ENCODE measurements at regions of chr16 and their contacts with region 1.

Region 1: GRCh38 chr16:75110637-75111513 is 5.7 kb downstream of the LDHD start:
- DNase-seq: peak; percentile 92
- H3K4me3 Mint-ChIP-seq: peak overlapping the region; percentile 55
- H3K27ac Mint-ChIP-seq: peak overlapping the region; percentile 75
- H3K4me1 Mint-ChIP-seq: peaks cover 46% of the 10 kb centered on the region
- H3K27me3 Mint-ChIP-seq: peaks cover 12% of the 10 kb centered on the region

Region 2: GRCh38 chr16:74709441-74709877 is 401.4 kb before region 1 on chr16:
- CTCF ChIA-PET with region 1: interaction called, 8 read pairs
- intact Hi-C with region 1: loop called (anchors 1 kb)
- DNase-seq: peak; percentile 91
- H3K4me3 Mint-ChIP-seq: no peak overlapping the region
- H3K27ac Mint-ChIP-seq: no peak overlapping the region
- H3K4me1 Mint-ChIP-seq: peaks cover 5% of the 10 kb centered on the region
- H3K27me3 Mint-ChIP-seq: no peaks in the 10 kb centered on the region

Region 3: GRCh38 chr16:74743668-74744299 is 367.1 kb before region 1 on chr16:
- CTCF ChIA-PET with region 1: no interaction called
- intact Hi-C with region 1: no loop called
- DNase-seq: no peak
- H3K4me3 Mint-ChIP-seq: no peak overlapping the region
- H3K27ac Mint-ChIP-seq: no peak overlapping the region
- H3K4me1 Mint-ChIP-seq: no peaks in the 10 kb centered on the region
- H3K27me3 Mint-ChIP-seq: peaks cover 2% of the 10 kb centered on the region

Region 4: DNA sequence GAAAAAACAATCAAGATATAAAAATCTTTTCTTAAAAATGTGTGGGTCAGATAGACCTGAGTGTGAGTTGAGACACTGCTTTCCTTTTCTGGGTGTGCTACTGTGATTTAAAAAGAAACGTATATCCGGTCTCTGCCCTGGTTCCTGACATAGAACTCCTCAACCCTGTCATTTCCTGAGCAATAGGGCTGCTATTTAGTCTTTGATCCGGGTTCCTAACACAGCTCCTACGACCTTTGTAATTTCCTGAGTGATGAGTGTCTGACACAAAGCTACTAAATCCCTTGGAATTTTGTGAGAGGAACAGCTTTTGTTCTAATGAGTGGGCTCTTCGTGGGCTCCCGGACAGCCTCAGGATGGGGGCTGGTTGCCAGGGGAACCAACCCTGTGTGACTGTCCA is 242.4 kb before region 1 on chr16:
- CTCF ChIA-PET with region 1: no interaction called
- intact Hi-C with region 1: loop called (anchors 2 kb)
- DNase-seq: peak; percentile 24
- H3K4me3 Mint-ChIP-seq: peak overlapping the region; percentile 25
- H3K27ac Mint-ChIP-seq: peak overlapping the region; percentile 88
- H3K4me1 Mint-ChIP-seq: peaks cover 25% of the 10 kb centered on the region
- H3K27me3 Mint-ChIP-seq: no peaks in the 10 kb centered on the region

Region 5: DNA sequence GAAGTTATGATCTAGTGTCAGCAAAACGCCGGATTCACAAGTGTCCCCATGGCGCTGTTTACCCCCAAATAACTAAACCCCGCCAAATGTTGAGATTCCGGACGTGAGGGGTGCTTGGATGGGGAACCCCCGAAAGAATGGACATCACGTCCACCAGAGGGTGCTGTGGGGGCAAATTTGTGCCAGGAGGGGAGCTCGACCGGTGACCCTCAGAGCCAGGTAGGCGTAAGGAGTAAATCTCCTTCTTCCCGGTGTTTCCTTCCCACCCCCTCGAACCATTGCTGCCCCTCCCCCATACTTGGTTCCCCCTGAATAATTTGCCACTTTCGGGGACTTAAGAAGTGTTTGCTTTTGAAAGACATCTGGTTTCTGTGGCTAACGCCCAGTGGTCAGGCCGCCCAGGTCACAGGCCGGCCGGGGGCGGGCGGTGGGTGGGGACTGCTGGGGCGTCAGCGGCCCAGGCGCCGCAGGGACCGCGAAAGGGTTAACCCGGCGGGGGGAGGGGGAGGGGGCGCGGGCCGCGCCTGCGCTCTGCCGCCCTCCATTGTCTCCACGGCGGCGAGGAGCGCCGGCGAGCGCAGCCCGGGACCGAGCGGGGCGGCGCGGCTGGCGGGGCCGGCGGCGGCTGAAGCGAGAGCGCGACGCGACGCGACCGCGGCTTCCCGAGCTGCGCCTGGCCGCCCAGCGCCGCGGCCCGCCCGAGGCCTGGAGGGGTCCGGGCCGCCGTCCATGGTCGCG is 112.2 kb before region 1 on chr16 and contains the start of gene ZNRF1:
- CTCF ChIA-PET with region 1: interaction called, 155 read pairs
- intact Hi-C with region 1: loop called (anchors 1 kb)
- DNase-seq: peak; percentile 92
- H3K4me3 Mint-ChIP-seq: peak within 1 kb of the TSS; percentile 79
- H3K27ac Mint-ChIP-seq: peak within 1 kb of the TSS; percentile 83
- H3K4me1 Mint-ChIP-seq: peaks cover 25% of the 10 kb centered on the region
- H3K27me3 Mint-ChIP-seq: peaks cover 12% of the 10 kb centered on the region
- total RNA-seq, gene ZNRF1: 35.3 to 35.7 TPM

Region 6: GRCh38 chr16:75064403-75065148 is 46.3 kb before region 1 on chr16:
- CTCF ChIA-PET with region 1: interaction called, 23 read pairs
- intact Hi-C with region 1: loop called (anchors 1 kb)
- DNase-seq: peak; percentile 65
- H3K4me3 Mint-ChIP-seq: peak overlapping the region; percentile 54
- H3K27ac Mint-ChIP-seq: no peak overlapping the region
- H3K4me1 Mint-ChIP-seq: peaks cover 25% of the 10 kb centered on the region
- H3K27me3 Mint-ChIP-seq: no peaks in the 10 kb centered on the region

Region 7: GRCh38 chr16:75099756-75100602 is 10.9 kb before region 1 on chr16:
- CTCF ChIA-PET with region 1: interaction called, 65 read pairs
- intact Hi-C with region 1: loop called (anchors 1 kb)
- DNase-seq: peak; percentile 74
- H3K4me3 Mint-ChIP-seq: no peak overlapping the region
- H3K27ac Mint-ChIP-seq: peak overlapping the region; percentile 68
- H3K4me1 Mint-ChIP-seq: peaks cover 39% of the 10 kb centered on the region
- H3K27me3 Mint-ChIP-seq: no peaks in the 10 kb centered on the region

Region 8: GRCh38 chr16:75148311-75149195 is 37.7 kb after region 1 on chr16 and contains the start of gene ZFP1:
- CTCF ChIA-PET with region 1: interaction called, 5 read pairs
- intact Hi-C with region 1: loop called (anchors 1 kb)
- DNase-seq: peak; percentile 97
- H3K4me3 Mint-ChIP-seq: peak within 1 kb of the TSS; percentile 80
- H3K27ac Mint-ChIP-seq: peak within 1 kb of the TSS; percentile 73
- H3K4me1 Mint-ChIP-seq: peaks cover 37% of the 10 kb centered on the region
- H3K27me3 Mint-ChIP-seq: no peaks in the 10 kb centered on the region
- total RNA-seq, gene ZFP1: 20.2 to 20.9 TPM

Measured in activated naive CD4-positive, alpha-beta T cell treated with anti-CD3 and anti-CD28 coated beads for 36 hours (primary cell).